MCF 10A (cell line): ENCODE measurements at regions of chrX and their contacts with region 1.

Region 1: GRCh38 chrX:130916636-130917422 is 13.8 kb upstream of the ENOX2 start:
- DNase-seq: peak; percentile 77
- H3K4me3 Mint-ChIP-seq: no peak overlapping the region
- H3K27ac Mint-ChIP-seq: no peak overlapping the region
- H3K4me1 Mint-ChIP-seq: no peaks in the 10 kb centered on the region
- H3K27me3 Mint-ChIP-seq: peaks cover 35% of the 10 kb centered on the region
- CTCF ChIP-seq: peak; percentile 91

Region 2: DNA sequence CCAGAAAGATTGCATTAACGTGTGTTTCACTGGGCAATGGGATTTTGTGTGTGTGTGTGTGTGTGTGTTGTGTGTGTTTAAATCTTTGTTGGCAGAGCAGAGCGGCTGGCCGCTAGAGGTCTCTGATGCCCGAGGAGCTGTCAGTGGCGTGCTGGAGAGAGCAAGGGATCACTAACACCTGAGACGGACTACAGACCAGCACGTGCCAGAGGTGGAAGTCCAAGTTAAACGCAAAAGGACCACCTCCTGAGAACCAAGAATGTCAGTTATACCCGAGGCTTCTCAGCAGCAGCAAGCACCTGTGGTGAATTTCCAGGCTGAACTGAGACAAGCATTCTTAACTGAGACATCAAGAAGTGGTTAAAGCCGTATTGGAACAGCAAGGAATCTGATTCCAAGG is 586.1 kb before region 1 on chrX:
- CTCF ChIA-PET with region 1: interaction called, 16 read pairs
- POLR2A ChIA-PET with region 1: no interaction called
- intact Hi-C with region 1: loop called (anchors 1 kb)
- DNase-seq: peak; percentile 66
- H3K4me3 Mint-ChIP-seq: no peak overlapping the region
- H3K27ac Mint-ChIP-seq: no peak overlapping the region
- H3K4me1 Mint-ChIP-seq: no peaks in the 10 kb centered on the region
- H3K27me3 Mint-ChIP-seq: peaks cover 49% of the 10 kb centered on the region
- CTCF ChIP-seq: peak; percentile 51

Region 3: GRCh38 chrX:130401415-130402207 is 515.2 kb before region 1 on chrX and contains the start of gene RBMX2:
- CTCF ChIA-PET with region 1: interaction called, 20 read pairs
- POLR2A ChIA-PET with region 1: no interaction called
- intact Hi-C with region 1: no loop called
- DNase-seq: peak; percentile 72
- H3K4me3 Mint-ChIP-seq: peak within 1 kb of the TSS; percentile 79
- H3K27ac Mint-ChIP-seq: peak within 1 kb of the TSS; percentile 38
- H3K4me1 Mint-ChIP-seq: no peaks in the 10 kb centered on the region
- H3K27me3 Mint-ChIP-seq: peaks cover 36% of the 10 kb centered on the region
- CTCF ChIP-seq: no peak
- total RNA-seq, gene RBMX2: 31.2 and 34.4 TPM in 2 replicates

Region 4: DNA sequence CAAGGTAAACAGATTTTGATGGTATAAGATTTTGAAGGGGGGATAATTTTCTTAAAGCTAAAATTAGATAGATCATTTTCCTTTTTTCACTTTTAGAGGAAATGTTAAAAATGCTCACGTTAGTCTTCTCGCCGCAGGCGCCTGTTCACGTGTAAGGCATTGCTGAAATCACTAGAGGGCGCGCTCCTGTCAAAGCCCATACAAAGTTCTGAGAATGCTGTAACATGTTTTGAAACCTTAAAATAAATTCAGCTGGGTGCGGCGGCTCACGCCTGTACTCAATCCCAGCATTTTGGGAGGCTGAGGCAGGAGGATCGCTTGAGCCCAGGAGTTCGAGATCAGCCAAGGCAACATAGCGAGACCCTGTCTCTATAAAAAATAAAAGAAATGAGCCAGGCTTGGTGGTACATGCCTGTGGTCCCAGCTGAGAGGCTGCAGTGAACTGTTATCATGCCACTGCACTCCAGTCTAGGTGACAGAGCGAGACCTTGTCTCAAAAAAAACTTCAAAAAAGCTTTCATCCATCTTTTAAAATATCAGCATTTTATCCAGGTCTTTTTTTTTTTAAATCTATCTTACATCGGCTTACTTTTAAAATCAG is 377.0 kb before region 1 on chrX:
- CTCF ChIA-PET with region 1: interaction called, 29 read pairs
- POLR2A ChIA-PET with region 1: no interaction called
- intact Hi-C with region 1: loop called (anchors 1 kb)
- DNase-seq: peak; percentile 66
- H3K4me3 Mint-ChIP-seq: no peak overlapping the region
- H3K27ac Mint-ChIP-seq: no peak overlapping the region
- H3K4me1 Mint-ChIP-seq: no peaks in the 10 kb centered on the region
- H3K27me3 Mint-ChIP-seq: peaks cover 30% of the 10 kb centered on the region
- CTCF ChIP-seq: peak; percentile 54

Region 5: DNA sequence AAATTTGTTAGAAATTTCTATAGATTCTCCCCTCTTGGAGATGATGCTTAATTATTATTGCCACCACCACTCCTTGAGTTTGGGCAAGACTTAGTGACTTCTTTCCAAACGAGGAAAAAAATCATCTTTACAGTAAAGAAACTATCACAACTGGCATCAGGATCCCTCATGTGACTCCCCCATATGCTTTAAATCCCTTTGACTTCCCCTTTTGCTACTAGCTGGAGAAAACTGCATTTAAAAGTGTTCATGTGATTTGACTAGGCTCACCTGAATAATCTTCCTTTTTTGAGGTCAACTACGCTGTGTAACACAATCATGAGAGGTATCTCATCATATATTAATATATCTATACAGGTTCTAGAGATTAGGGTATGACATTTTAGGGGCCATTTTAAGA is 16.5 kb after region 1 on chrX:
- CTCF ChIA-PET with region 1: interaction called, 13 read pairs
- POLR2A ChIA-PET with region 1: no interaction called
- intact Hi-C with region 1: no loop called
- DNase-seq: no peak
- H3K4me3 Mint-ChIP-seq: no peak overlapping the region
- H3K27ac Mint-ChIP-seq: no peak overlapping the region
- H3K4me1 Mint-ChIP-seq: no peaks in the 10 kb centered on the region
- H3K27me3 Mint-ChIP-seq: peaks cover 54% of the 10 kb centered on the region
- CTCF ChIP-seq: no peak